ENCODE measurements at regions of chr3 and their contacts with region 1.

Region 1: GRCh38 chr3:18127174-18127858 is 297.8 kb downstream of the SATB1 start:
- DNase-seq: no peak
- H3K4me3 ChIP-seq: no peak overlapping the region
- H3K27ac ChIP-seq: no peak overlapping the region
- H3K4me1 ChIP-seq: no peaks in the 10 kb centered on the region
- H3K27me3 ChIP-seq: no peaks in the 10 kb centered on the region
- CTCF ChIP-seq: no peak

Region 2: GRCh38 chr3:17655743-17656142 is 471.6 kb before region 1 on chr3:
- intact Hi-C with region 1: no loop called
- DNase-seq: no peak
- H3K4me3 ChIP-seq: no peak overlapping the region
- H3K27ac ChIP-seq: no peak overlapping the region
- H3K4me1 ChIP-seq: no peaks in the 10 kb centered on the region
- H3K27me3 ChIP-seq: no peaks in the 10 kb centered on the region
- CTCF ChIP-seq: no peak

Region 3: GRCh38 chr3:17831366-17831765 is 295.9 kb before region 1 on chr3:
- intact Hi-C with region 1: no loop called
- DNase-seq: no peak
- H3K4me3 ChIP-seq: no peak overlapping the region
- H3K27ac ChIP-seq: no peak overlapping the region
- H3K4me1 ChIP-seq: no peaks in the 10 kb centered on the region
- H3K27me3 ChIP-seq: no peaks in the 10 kb centered on the region
- CTCF ChIP-seq: no peak

Region 4: DNA sequence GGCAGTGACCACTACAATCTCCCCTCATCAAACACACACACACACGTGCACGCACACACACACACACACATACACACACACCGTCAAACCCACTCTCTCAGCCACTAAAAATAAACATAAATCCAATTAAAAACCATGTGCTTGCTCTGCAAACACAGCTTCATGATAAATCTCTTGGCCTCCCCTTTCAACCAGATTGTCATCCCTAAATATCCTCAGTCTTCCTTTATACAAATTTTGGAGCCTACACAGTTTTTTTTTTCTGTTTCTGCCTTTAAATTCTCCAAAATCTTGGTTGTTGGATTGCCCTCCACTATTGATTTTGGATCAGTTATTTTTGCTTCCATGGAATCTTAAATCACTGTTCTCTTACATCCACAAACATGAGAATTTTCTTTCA is 52.2 kb after region 1 on chr3:
- intact Hi-C with region 1: loop called (anchors 5 kb)
- DNase-seq: peak in 1 of 5 donors; percentile 4
- H3K4me3 ChIP-seq: no peak overlapping the region
- H3K27ac ChIP-seq: no peak overlapping the region
- H3K4me1 ChIP-seq: no peaks in the 10 kb centered on the region
- H3K27me3 ChIP-seq: no peaks in the 10 kb centered on the region
- CTCF ChIP-seq: no peak